Endothelial cell of umbilical vein (primary cell): ENCODE measurements at regions of chr6 and their contacts with region 1.

Region 1: DNA sequence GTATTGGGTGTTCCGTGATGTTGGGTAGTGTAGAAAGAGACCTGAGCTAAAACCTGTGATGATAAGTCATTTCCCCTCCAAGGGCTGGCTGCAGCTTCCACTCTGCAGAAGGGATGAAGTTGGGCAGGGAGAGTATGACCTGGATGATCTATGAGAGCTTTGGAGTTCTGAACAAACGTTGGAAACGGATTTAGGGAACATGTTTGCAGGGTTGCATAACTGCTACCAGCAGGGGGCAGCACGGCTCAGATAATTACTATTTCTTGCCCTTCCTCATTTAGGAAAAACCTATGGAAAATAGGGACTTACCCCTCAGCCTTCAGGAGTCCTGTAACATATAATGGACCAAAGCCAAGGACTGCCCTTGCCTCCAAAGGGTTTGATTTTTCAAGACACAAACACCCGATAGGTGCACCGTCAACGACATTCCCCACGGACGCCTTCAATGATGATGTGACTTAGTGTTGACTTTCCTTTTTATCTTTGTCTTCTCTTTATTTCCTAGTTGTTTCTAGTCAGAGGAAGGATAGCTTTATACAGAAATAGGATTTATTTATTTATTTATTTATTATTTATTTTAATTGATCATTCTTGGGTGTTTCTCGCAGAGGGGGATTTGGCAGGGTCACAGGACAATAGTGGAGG is 164.9 kb upstream of the SASH1 start:
- DNase-seq: peak; percentile 72
- H3K4me3 ChIP-seq: no peak overlapping the region
- H3K27ac ChIP-seq: no peak overlapping the region
- H3K4me1 ChIP-seq: peaks cover 5% of the 10 kb centered on the region
- H3K27me3 ChIP-seq: no peaks in the 10 kb centered on the region
- CTCF ChIP-seq: peak; percentile 70 to 82
- POLR2A ChIP-seq: no peak

Region 2: DNA sequence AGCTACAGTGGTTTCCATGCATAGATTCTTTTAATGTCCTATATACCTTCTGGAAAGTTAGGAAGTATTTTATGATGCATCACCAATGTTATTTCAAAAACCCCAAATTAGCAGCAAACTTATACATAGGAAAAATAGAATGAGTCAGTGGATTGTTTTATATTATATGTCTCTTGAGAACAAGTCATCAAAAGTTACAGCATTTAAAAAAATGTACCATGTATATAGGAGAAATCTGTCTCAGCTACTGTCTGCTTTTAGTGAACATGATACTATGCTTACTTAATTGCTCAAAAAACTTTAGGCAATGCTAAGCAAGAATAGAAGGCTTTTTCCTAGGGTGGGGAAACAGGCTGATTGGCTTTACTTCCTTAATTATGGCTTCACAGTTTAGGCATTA is 303.9 kb before region 1 on chr6:
- CTCF ChIA-PET with region 1: no interaction called
- POLR2A ChIA-PET with region 1: no interaction called
- dilution Hi-C with region 1: no loop called
- intact Hi-C with region 1: no loop called
- DNase-seq: no peak
- H3K4me3 ChIP-seq: no peak overlapping the region
- H3K27ac ChIP-seq: peak overlapping the region; percentile 44
- H3K4me1 ChIP-seq: peaks cover 36% of the 10 kb centered on the region
- H3K27me3 ChIP-seq: no peaks in the 10 kb centered on the region
- CTCF ChIP-seq: no peak
- POLR2A ChIP-seq: no peak

Region 3: GRCh38 chr6:148128014-148128730 is 49.5 kb before region 1 on chr6:
- CTCF ChIA-PET with region 1: no interaction called
- POLR2A ChIA-PET with region 1: no interaction called
- dilution Hi-C with region 1: no loop called
- intact Hi-C with region 1: no loop called
- DNase-seq: no peak
- H3K4me3 ChIP-seq: no peak overlapping the region
- H3K27ac ChIP-seq: no peak overlapping the region
- H3K4me1 ChIP-seq: peaks cover 5% of the 10 kb centered on the region
- H3K27me3 ChIP-seq: no peaks in the 10 kb centered on the region
- CTCF ChIP-seq: no peak
- POLR2A ChIP-seq: no peak

Region 4: DNA sequence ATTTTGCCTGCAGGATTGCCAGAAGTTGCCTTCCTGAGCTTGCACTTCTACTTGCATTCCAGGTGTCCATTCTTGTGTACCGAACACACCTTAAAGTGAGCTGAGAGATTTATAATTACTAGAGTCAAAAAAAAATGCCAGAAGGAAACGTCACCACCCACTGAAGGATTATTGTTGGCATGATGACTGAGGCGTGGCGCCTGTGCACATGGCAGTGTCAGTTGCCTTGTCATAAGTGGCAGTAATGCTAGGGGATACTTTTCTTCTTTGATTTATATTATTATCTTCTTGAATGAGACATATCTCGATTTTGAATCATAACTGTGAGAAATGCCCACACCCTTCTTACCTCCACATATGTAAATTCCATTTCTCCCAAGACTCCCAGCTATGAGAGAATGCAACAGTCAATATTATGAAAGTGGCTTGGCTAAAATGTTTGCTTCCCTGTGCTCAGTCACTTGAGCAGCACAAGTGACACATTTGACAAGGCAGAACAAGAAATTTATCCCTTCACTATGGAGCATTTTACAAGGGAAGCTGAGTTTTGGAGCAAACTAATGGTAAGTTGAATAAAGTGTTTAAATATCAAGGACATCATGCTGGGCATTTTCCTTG is 15.5 kb after region 1 on chr6:
- CTCF ChIA-PET with region 1: interaction called, 13 read pairs
- POLR2A ChIA-PET with region 1: no interaction called
- dilution Hi-C with region 1: no loop called
- intact Hi-C with region 1: no loop called
- DNase-seq: no peak
- H3K4me3 ChIP-seq: no peak overlapping the region
- H3K27ac ChIP-seq: no peak overlapping the region
- H3K4me1 ChIP-seq: no peaks in the 10 kb centered on the region
- H3K27me3 ChIP-seq: no peaks in the 10 kb centered on the region
- CTCF ChIP-seq: no peak
- POLR2A ChIP-seq: no peak

Region 5: GRCh38 chr6:148263010-148263409 is 85.3 kb after region 1 on chr6:
- CTCF ChIA-PET with region 1: interaction called, 15 read pairs
- POLR2A ChIA-PET with region 1: interaction called, 3 read pairs
- dilution Hi-C with region 1: no loop called
- intact Hi-C with region 1: loop called (anchors 5 kb)
- DNase-seq: no peak
- H3K4me3 ChIP-seq: no peak overlapping the region
- H3K27ac ChIP-seq: no peak overlapping the region
- H3K4me1 ChIP-seq: peaks cover 6% of the 10 kb centered on the region
- H3K27me3 ChIP-seq: no peaks in the 10 kb centered on the region
- CTCF ChIP-seq: no peak
- POLR2A ChIP-seq: no peak

Region 6: DNA sequence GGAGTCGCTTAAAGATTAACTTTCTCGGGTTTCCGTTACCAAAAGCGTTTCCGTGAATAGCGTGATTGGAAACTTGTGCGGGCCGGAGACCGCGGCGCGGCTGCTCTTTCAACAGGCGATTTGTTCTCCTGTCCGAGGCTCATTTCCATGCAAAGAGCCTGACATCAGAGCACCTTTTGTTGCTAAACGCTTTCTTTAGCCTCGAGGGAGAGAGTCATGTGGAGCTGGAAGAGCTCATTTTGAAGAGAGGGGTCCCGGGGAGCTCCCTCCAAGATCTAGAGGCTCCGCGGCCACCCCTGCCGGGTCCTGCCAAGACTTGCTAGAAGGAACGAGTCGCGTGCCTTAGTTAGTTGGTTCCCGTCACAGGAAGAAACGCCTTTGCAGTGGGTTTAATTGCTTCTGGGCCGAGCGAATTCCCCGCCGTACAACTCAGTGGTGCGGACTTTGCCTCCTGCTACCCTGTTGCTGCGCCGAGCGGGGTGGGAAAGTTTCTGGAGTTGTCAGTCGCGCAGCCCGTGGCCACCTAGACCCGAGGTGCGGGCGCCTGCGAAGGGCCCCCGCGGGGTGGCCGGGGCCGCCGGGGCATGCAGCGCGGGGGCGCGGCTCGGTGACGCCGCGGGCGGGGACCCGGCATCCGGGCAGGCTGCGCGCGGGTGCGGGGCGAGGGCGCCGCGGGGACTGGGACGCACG is 164.8 kb after region 1 on chr6 and contains the start of gene SASH1:
- CTCF ChIA-PET with region 1: interaction called, 9 read pairs
- POLR2A ChIA-PET with region 1: no interaction called
- dilution Hi-C with region 1: no loop called
- intact Hi-C with region 1: loop called (anchors 1 kb)
- DNase-seq: peak; percentile 89
- H3K4me3 ChIP-seq: peak within 1 kb of the TSS; percentile 69 to 97 (median 96)
- H3K27ac ChIP-seq: peak within 1 kb of the TSS; percentile 94
- H3K4me1 ChIP-seq: peaks cover 53% of the 10 kb centered on the region
- H3K27me3 ChIP-seq: no peaks in the 10 kb centered on the region
- CTCF ChIP-seq: no peak
- POLR2A ChIP-seq: no peak
- total RNA-seq, gene SASH1: 97.5 and 103 TPM in 2 replicates

Region 7: DNA sequence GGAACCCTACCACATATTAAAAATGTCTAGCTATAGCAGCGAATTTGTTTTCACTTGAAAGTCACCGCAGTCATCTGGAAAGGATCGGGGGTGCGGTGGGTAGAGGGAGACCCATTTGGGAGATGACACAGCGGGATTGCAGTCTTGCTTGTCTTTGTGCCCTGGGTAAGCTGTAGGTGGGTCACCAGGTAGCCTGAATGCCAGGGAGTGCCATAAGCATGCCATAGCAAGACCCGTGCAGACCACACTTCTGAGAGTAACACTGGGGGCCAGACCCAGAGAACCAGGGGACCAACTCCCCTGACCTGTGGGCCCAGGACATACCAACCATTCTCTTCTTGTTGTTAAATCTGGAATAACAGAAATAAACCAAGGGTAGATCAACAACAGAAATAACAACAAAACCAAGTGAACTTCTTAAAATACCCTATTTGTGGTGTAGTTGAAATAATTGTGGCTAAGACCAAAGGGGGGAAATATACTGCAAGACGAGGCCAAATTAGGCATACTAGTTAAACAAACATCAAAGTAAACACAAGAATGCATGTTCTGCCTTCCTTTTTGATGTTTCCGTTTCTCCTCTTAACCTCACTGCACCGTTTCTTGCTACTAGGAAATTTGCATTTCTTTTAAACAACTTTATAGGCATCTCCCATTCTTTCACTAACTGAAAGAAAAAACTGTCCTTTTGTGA is 293.0 kb after region 1 on chr6:
- CTCF ChIA-PET with region 1: interaction called, 21 read pairs
- POLR2A ChIA-PET with region 1: no interaction called
- dilution Hi-C with region 1: no loop called
- intact Hi-C with region 1: no loop called
- DNase-seq: no peak
- H3K4me3 ChIP-seq: no peak overlapping the region
- H3K27ac ChIP-seq: no peak overlapping the region
- H3K4me1 ChIP-seq: no peaks in the 10 kb centered on the region
- H3K27me3 ChIP-seq: no peaks in the 10 kb centered on the region
- CTCF ChIP-seq: no peak
- POLR2A ChIP-seq: no peak